Ascending aorta (tissue), 2 donors: ENCODE measurements at regions of chr1 and their contacts with region 1.

Region 1: GRCh38 chr1:161314201-161314981 is at the start of gene SDHC:
- DNase-seq: peak; percentile 45 to 95
- H3K4me3 ChIP-seq: peak within 1 kb of the TSS; percentile 77 to 81
- H3K27ac ChIP-seq: peak within 1 kb of the TSS; percentile 87 to 95
- H3K4me1 ChIP-seq: peaks cover 0 to 6% of the 10 kb centered on the region in 2 donors
- H3K27me3 ChIP-seq: no peaks in the 10 kb centered on the region
- CTCF ChIP-seq: no peak
- total RNA-seq, gene SDHC: 23.2 TPM

Region 2: DNA sequence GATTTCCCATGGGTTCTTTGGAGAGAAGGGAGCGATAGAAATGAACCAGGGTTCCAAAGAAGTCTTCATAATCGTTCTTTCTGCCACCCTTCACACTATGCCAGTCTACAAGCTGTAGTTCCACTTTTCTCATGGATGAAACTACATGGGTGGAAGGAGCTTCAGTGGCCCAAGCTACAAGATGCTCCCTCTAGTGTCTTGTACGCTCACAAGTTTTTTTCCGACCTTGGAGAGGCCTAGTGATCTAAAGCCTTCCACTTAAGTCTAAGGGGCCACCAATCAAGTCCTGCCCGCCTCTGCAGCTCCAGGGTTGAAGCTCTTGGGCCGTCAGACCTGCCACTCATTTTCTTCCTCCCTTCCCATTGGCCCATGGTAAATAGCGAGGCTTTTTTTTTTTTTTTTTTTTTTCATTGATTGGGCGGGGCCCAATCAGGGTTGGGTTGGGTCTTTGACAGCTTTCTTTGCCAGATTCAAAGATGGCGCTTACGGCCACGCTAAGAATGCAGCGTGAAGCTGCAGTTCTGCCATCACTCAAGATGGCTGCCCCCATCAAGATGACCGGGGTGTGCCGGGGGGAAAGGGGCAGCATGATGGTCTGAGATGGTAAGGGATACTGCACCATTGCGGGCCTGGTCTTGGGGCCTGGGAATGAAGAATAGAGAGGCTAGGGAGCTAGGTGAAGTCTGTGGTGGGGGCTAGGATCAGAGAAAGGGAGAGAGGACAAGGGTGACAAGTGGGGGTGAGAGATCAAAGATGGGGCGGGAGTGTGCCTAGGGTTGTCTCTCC is 88.7 kb before region 1 on chr1 and contains the start of gene TOMM40L:
- intact Hi-C with region 1: loop called (anchors 2 kb)
- DNase-seq: peak; percentile 79 to 96
- H3K4me3 ChIP-seq: peak within 1 kb of the TSS; percentile 84 to 94
- H3K27ac ChIP-seq: peak within 1 kb of the TSS; percentile 51 to 65
- H3K4me1 ChIP-seq: peaks cover 7 to 16% of the 10 kb centered on the region in 2 donors
- H3K27me3 ChIP-seq: no peaks in the 10 kb centered on the region
- CTCF ChIP-seq: peak in 2 of 3 experiments; percentile 27 to 36
- total RNA-seq, gene TOMM40L: 26.6 TPM

Region 3: DNA sequence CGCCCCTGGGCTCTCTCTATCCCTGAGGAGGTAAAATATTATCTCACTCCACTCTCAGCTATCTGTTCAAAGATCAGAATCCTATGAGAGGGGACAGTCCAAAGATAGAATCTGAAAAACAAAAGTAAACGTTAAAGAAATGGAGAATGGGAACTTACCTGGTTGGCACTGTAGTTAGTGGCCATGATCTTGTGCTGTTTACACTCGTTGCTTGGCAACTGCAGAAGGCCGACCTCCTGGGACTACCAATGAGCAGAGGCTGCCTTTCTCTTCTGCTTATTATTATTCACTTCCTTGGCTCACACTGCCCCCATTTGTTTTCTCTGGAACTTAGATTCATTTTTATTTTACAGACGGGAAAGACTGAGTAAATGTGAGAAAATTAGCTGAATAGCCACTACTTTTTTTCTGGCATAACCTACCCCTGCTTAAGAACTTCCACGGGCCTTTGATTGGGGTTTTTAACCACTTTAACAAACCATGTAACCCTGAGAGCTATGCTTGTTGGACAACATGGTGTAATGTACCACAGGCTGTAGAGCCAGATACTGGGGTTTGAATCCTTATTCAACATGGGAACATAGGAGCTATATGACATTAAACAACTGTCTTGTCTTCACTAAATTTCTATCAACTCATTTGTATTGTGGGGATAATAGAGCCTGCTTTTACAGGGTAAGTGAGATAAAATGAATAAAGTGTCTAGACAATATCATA is 53.5 kb after region 1 on chr1 and contains the start of gene CFAP126:
- intact Hi-C with region 1: loop called (anchors 5 kb)
- DNase-seq: peak; percentile 64 to 86
- H3K4me3 ChIP-seq: no peak within 1 kb of the TSS
- H3K27ac ChIP-seq: peak within 1 kb of the TSS; percentile 62 to 75
- H3K4me1 ChIP-seq: peaks cover 0 to 9% of the 10 kb centered on the region in 2 donors
- H3K27me3 ChIP-seq: no peaks in the 10 kb centered on the region
- CTCF ChIP-seq: peak in 1 of 3 experiments; percentile 36
- total RNA-seq, gene CFAP126: not detected

Region 4: GRCh38 chr1:161382214-161383019 is 68.0 kb after region 1 on chr1:
- intact Hi-C with region 1: loop called (anchors 5 kb)
- DNase-seq: peak in 1 of 2 donors; percentile 81
- H3K4me3 ChIP-seq: no peak overlapping the region
- H3K27ac ChIP-seq: peak overlapping the region; percentile 78
- H3K4me1 ChIP-seq: peaks cover 0 to 4% of the 10 kb centered on the region in 2 donors
- H3K27me3 ChIP-seq: no peaks in the 10 kb centered on the region
- CTCF ChIP-seq: peak; percentile 53 to 71 (median 62)

Region 5: GRCh38 chr1:161766102-161766981 is 452.0 kb after region 1 on chr1 and contains the start of gene ATF6:
- intact Hi-C with region 1: loop called (anchors 10 kb)
- DNase-seq: peak; percentile 75 to 96
- H3K4me3 ChIP-seq: peak within 1 kb of the TSS; percentile 55 to 93
- H3K27ac ChIP-seq: peak within 1 kb of the TSS; percentile 77 to 91
- H3K4me1 ChIP-seq: peaks cover 0 to 16% of the 10 kb centered on the region in 2 donors
- H3K27me3 ChIP-seq: no peaks in the 10 kb centered on the region
- CTCF ChIP-seq: no peak
- total RNA-seq, gene ATF6: 12.3 TPM